RWPE1 (cell line): ENCODE measurements at regions of chr3 and their contacts with region 1.

Region 1: DNA sequence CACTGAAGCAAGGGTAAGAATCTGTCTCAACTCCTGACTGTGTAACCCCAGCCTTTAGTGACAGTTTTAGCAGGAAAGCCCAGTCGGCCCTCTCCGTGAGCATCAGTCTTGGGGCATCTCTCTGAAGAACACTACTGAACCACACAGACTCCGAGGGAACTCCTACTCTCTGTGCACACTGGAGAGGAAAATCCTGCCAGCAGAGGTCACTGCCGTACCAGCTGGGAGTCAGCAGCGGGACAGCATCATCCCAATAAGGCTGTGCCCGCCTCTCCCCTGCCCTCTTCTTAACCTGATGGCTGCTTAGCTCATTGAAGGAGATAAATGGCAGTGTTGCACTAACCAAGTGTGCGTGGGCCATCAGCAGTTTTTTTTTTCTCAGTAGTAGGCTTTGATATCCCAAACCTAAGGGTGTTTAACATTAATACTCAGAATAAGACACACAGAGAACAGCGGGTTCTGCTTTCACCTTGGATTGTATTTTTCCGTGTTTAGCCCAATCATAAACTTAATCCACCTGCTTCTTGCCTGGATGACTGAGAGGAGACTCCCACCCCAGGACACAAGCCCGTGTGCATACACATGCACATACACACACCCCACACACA is 26.6 kb upstream of the RASA2 start:
- DNase-seq: peak; percentile 83
- H3K27ac ChIP-seq: no peak overlapping the region
- CTCF ChIP-seq: peak; percentile 95

Region 2: DNA sequence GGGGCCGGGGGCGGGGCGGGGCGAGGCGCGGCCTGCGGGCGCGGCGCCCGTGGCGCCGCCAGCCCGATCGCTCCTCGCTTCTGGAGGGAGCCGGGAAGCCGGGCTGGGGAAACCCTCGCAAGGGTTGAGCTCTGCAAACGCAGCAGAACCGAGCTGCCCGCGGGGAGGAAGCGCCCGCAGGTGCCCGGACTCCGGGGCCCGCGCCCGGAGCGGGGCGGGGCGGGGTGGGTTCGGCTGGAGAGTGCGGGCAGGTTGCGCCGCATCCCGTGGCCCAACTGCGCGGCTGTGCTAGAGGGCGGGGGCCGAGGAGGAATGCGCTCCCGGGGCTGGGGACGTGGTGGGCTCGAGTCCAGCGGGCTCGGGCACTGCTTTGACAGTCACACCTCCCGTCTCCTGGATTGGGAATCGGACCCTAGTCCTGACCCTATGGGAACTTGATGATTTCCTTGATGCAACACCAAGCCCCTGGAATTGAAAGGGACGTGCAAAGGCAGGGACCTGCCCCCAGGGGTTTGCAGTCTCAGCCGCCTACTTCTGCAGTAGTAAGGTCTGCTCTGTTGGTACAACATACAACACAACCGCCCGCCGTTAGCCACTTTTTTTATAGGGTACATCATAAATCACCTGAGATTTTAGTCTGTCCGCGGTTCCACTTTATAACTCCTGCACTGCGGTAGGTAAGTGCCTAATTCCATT is 57.6 kb before region 1 on chr3:
- CTCF ChIA-PET with region 1: no interaction called
- POLR2A ChIA-PET with region 1: no interaction called
- DNase-seq: peak; percentile 47
- H3K27ac ChIP-seq: peak overlapping the region; percentile 88
- CTCF ChIP-seq: no peak

Region 3: GRCh38 chr3:141561426-141562034 is 101.3 kb after region 1 on chr3:
- CTCF ChIA-PET with region 1: interaction called, 53 read pairs
- POLR2A ChIA-PET with region 1: no interaction called
- DNase-seq: peak; percentile 33
- H3K27ac ChIP-seq: no peak overlapping the region
- CTCF ChIP-seq: peak; percentile 99